ENCODE measurements at regions of chr15 and their contacts with region 1.

Region 1: DNA sequence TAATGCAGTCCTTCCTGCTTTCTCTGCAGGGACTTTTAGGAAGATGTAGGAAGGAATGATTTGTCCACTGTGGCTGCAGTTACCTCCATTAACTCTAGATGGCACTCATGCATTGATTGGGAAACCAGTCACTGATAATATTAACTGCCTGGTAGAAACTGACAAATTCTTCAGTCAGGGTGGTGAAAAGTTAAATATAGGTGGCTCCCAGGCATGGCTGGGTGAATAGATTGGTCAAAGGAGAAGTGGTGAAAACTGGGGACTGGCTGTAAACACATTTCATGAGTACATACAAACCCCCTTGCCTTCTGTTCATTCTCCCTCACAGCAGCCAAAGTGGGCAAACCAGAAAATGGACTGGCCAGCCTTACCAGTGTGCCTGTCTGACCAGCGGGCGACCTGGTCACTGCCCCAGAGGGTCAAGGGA is 333.4 kb downstream of the THSD4 start:
- DNase-seq: peak in 1 of 2 donors; percentile 62
- ATAC-seq: peak; percentile 47 to 82 (median 65)
- H3K4me3 ChIP-seq: no peak overlapping the region
- H3K27ac ChIP-seq: peak overlapping the region in 9 of 10 donors; percentile 19 to 66 (median 54)
- H3K4me1 ChIP-seq: peaks cover 0 to 58% (median 30%) of the 10 kb centered on the region in 9 donors
- H3K27me3 ChIP-seq: no peaks in the 10 kb centered on the region
- CTCF ChIP-seq: peak; percentile 74 to 97 (median 91)

Region 2: DNA sequence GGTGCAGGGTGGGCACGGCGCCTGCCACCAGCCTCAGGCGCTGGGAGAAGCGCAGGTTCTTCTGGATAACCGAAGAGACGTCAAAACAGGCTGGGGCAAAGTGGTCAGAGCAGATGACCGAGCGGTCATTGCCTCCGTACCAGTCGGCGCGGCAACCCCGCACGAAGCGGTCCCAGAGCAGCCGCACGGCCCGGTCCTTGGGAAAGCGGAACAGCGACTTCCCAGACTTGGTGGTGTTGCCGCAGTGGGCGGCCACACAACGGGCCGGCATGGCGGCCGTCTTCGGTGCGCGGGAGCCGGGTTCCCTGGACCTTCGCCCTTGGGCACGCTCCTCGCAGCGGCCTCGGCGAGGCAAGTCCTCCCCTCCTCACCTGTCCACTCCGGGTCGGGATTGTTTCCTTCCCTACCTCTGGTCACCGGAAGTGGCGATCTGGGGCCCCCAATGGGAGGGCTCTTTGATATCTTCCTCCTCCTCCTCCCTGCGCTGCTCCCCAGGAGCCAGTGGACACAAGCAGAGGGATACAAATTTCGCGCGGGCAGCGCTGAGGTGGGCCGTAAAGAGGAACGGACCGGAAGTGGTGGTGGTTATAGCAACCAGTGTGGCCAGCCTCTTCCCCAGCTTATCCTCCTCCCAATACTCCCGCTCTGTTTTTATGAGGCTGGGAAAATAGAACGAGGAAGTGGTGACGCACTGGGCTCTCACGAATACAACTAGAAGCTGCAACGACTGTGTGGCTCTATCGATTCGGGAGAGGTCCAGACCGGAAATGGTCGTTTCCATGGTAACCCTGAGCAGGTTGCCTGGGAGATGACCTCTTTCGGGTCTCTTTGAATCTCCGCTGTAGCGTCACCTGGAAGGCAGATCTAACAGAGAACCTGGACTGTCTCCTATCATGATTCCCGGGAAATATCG is 556.4 kb before region 1 on chr15 and contains the starts of genes LRRC49 and THAP10:
- intact Hi-C with region 1: loop called in 4 of 10 experiments (anchors 5 to 10 kb)
- DNase-seq: peak; percentile 80 to 92
- ATAC-seq: peak; percentile 94 to 99 (median 98)
- H3K4me3 ChIP-seq: peak within 1 kb of the TSS; percentile 64 to 92 (median 68)
- H3K27ac ChIP-seq: peak within 1 kb of the TSS; percentile 41 to 86 (median 72)
- H3K4me1 ChIP-seq: peaks cover 0 to 26% (median 13%) of the 10 kb centered on the region in 9 donors
- H3K27me3 ChIP-seq: no peaks in the 10 kb centered on the region
- CTCF ChIP-seq: no peak
- total RNA-seq, gene LRRC49: 28.4 to 149 (median 78.9) TPM
- total RNA-seq, gene THAP10: 3.0 to 7.0 (median 5.0) TPM

Region 3: GRCh38 chr15:71011503-71012155 is 437.1 kb before region 1 on chr15:
- intact Hi-C with region 1: loop called in 7 of 10 experiments (anchors 5 to 10 kb)
- DNase-seq: no peak
- ATAC-seq: peak in 7 of 8 donors; percentile 71 to 84 (median 81)
- H3K4me3 ChIP-seq: peak overlapping the region in 5 of 10 donors; percentile 20 to 50 (median 48)
- H3K27ac ChIP-seq: peak overlapping the region in 2 of 10 donors; percentile 4 to 80
- H3K4me1 ChIP-seq: peaks cover 0 to 10% (median 3%) of the 10 kb centered on the region in 9 donors
- H3K27me3 ChIP-seq: no peaks in the 10 kb centered on the region
- CTCF ChIP-seq: peak; percentile 42 to 75 (median 70)

Region 4: DNA sequence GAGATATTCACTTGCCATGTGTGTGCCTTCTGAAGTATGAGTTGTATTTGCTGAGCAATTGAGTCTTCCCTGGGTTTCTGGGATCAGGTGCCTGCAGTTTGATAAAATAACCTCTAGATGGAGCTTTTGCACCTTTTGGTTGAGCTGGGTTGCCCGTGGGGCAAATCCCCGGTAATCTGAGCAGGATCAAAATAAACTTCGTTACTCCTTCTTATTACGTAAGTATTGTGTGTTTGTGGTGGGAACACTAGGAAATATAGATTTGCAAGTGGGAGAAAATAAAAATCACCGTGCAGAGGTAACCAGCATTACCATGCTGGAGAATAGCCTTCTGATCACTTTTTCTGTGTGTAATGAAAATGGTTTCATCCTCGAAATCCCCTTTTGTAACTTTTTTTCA is 84.3 kb after region 1 on chr15:
- intact Hi-C with region 1: no loop called
- DNase-seq: no peak
- ATAC-seq: peak in 1 of 8 donors; percentile 32
- H3K4me3 ChIP-seq: no peak overlapping the region
- H3K27ac ChIP-seq: no peak overlapping the region
- H3K4me1 ChIP-seq: peaks cover 0 to 17% (median 5%) of the 10 kb centered on the region in 9 donors
- H3K27me3 ChIP-seq: no peaks in the 10 kb centered on the region
- CTCF ChIP-seq: peak in 8 of 9 donors; percentile 29 to 54 (median 49)

Region 5: GRCh38 chr15:71547011-71547410 is 98.3 kb after region 1 on chr15:
- intact Hi-C with region 1: loop called in 2 of 10 experiments (anchors 5 to 10 kb)
- DNase-seq: peak; percentile 29 to 42
- ATAC-seq: peak in 7 of 8 donors; percentile 64 to 78 (median 70)
- H3K4me3 ChIP-seq: peak overlapping the region in 4 of 10 donors; percentile 9 to 27 (median 15)
- H3K27ac ChIP-seq: peak overlapping the region in 7 of 10 donors; percentile 3 to 67 (median 35)
- H3K4me1 ChIP-seq: peaks cover 0 to 41% (median 23%) of the 10 kb centered on the region in 9 donors
- H3K27me3 ChIP-seq: no peaks in the 10 kb centered on the region
- CTCF ChIP-seq: no peak

Region 6: DNA sequence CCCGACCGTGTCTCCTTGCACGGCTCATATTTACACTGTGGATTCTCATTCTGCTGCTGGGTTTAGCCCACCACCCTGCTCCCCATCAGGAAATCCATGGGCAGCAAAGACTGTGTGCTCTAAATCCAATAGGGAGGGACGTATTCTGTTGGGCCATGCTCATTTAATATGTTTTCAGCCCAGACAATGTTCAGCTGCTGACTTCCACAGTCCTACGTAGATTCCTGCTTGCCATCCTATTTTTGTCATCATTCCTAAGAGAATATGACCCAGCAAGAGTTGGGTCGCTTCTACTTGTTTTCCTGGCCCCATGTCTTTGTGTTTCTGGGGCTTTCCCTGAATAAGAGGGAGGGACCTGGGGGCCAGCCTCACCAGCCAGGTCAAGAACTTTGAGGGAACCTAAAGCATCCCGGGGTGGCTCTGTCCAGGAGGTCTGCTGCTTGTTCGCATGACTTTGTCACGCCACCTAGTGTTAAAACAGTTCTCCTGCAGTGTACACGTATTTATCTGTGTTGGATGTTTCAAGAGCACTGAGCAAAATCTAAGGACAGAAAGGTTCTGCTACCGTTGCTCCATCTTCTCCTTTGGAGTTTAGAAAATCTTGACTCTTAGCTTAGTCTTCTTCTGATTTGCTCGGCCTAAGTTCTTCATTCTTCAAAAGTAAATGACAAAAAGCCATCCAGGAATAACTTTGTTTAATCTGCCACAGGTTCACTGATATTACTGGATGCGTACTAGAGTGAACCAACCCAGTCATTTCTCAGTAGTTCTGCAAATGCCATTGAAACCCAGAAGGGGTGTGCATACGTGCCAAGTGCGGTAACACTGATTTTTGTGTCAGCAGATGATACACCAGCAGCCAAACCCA is 281.8 kb after region 1 on chr15:
- intact Hi-C with region 1: loop called (anchors 1 to 5 kb)
- DNase-seq: peak in 1 of 2 donors; percentile 64
- ATAC-seq: peak; percentile 76 to 89 (median 84)
- H3K4me3 ChIP-seq: no peak overlapping the region
- H3K27ac ChIP-seq: peak overlapping the region in 5 of 10 donors; percentile 5 to 52 (median 42)
- H3K4me1 ChIP-seq: peaks cover 0 to 39% (median 10%) of the 10 kb centered on the region in 9 donors
- H3K27me3 ChIP-seq: no peaks in the 10 kb centered on the region
- CTCF ChIP-seq: peak; percentile 47 to 89 (median 80)

Measured in heart right ventricle (tissue), 16 donors.